ENCODE measurements at regions of chr10 and their contacts with region 1.

Region 1: DNA sequence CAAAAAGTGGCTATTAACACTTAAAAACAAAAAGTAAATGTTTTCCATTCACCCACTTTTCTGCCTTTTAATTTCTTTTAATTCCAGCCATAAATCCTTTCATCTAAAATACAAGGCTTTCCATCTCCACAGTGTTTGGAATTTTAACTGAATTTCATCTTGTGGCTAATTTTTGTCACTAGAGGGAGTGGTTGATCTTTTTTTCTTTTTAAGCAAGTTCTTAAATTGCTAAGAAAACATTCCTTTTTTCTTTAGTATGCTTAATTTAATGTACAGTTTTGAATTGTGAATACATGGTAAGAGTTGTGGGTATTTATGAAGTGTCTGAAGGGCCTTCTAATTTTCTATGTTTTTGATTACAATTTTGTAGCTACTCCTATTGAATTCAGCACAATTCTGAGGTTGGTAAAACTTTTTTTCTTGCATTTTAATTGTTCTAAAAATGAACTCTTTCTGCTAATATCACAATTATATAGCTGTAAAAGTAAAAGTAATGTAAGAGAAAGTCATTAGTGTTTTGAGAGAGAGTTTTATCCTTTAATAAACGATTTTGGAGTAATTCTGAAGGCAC is 54.9 kb upstream of the ANK3 start:
- DNase-seq: no peak
- ATAC-seq: no peak
- H3K4me3 Mint-ChIP-seq: no peak overlapping the region
- H3K27ac Mint-ChIP-seq: no peak overlapping the region
- H3K4me1 Mint-ChIP-seq: peaks cover 10% of the 10 kb centered on the region
- H3K27me3 Mint-ChIP-seq: peaks cover 2% of the 10 kb centered on the region

Region 2: GRCh38 chr10:60456053-60456452 is 11.5 kb after region 1 on chr10:
- CTCF ChIA-PET with region 1: no interaction called
- POLR2A ChIA-PET with region 1: no interaction called
- DNase-seq: no peak
- ATAC-seq: no peak
- H3K4me3 Mint-ChIP-seq: no peak overlapping the region
- H3K27ac Mint-ChIP-seq: no peak overlapping the region
- H3K4me1 Mint-ChIP-seq: no peaks in the 10 kb centered on the region
- H3K27me3 Mint-ChIP-seq: no peaks in the 10 kb centered on the region

Region 3: GRCh38 chr10:60646966-60647796 is 202.6 kb after region 1 on chr10:
- CTCF ChIA-PET with region 1: interaction called, 32 read pairs
- POLR2A ChIA-PET with region 1: no interaction called
- DNase-seq: peak; percentile 61
- ATAC-seq: no peak
- H3K4me3 Mint-ChIP-seq: no peak overlapping the region
- H3K27ac Mint-ChIP-seq: no peak overlapping the region
- H3K4me1 Mint-ChIP-seq: no peaks in the 10 kb centered on the region
- H3K27me3 Mint-ChIP-seq: peaks cover 2% of the 10 kb centered on the region

Measured in activated CD8-positive, alpha-beta T cell treated with anti-CD3 and anti-CD28 coated beads, Interleukin-2, amount 10 ng/mL, durations not matched to agents 7 days and 5 days (primary cell).